Panc1 (cell line): ENCODE measurements at regions of chr11 and their contacts with region 1.

Region 1: GRCh38 chr11:34512840-34513681 is 533 bp downstream of the ELF5 start:
- DNase-seq: peak; percentile 46
- ATAC-seq: peak; percentile 96
- H3K4me3 ChIP-seq: no peak overlapping the region
- H3K27ac ChIP-seq: no peak overlapping the region
- H3K4me1 ChIP-seq: no peaks in the 10 kb centered on the region
- H3K27me3 ChIP-seq: no peaks in the 10 kb centered on the region
- CTCF ChIP-seq: peak; percentile 93

Region 2: DNA sequence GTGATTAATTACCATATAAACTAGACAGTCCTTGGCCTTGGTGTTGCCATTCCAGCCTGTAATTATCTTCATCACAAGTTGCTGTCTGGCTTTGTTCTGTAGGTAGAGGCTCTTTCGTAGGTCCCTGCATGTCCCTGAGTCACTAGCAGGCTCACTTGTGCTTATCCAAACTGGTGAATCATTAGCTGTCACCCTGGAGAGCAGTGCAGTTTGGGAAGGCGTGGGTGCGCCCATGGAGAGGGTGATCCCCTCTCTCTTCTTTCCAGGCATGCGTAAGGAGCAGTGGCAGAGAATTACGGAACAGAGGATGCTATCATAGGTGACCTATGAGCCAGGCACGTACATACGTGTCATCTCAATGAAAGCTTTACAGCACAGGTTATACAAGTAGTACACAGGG is 96.8 kb after region 1 on chr11:
- CTCF ChIA-PET with region 1: no interaction called
- POLR2A ChIA-PET with region 1: no interaction called
- in situ Hi-C with region 1: no loop called
- intact Hi-C with region 1: no loop called
- DNase-seq: no peak
- ATAC-seq: no peak
- H3K4me3 ChIP-seq: no peak overlapping the region
- H3K27ac ChIP-seq: no peak overlapping the region
- H3K4me1 ChIP-seq: no peaks in the 10 kb centered on the region
- H3K27me3 ChIP-seq: no peaks in the 10 kb centered on the region
- CTCF ChIP-seq: no peak

Region 3: DNA sequence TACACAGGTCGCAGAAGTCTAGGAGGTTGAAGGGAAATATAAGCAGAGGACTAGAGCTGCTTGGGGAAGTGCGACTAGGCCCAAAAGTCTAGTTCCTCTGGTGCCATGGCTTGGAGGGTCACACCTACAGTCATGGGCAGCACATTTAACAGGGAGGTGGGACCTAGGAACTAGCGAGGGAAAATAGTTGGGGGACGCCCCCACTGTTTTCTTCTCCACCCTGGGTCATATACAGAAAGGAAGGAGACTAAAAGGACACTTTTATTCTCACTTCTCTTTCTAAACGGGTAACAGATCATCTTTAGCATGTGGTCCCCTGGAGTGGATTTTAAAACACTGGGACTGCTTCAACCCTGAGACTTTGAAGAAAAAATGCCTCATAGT is 386.6 kb after region 1 on chr11:
- CTCF ChIA-PET with region 1: interaction called, 9 read pairs
- POLR2A ChIA-PET with region 1: no interaction called
- in situ Hi-C with region 1: no loop called
- intact Hi-C with region 1: loop called (anchors 5 kb)
- DNase-seq: no peak
- ATAC-seq: peak; percentile 47; the same call in 1 of the 2 replicates
- H3K4me3 ChIP-seq: no peak overlapping the region
- H3K27ac ChIP-seq: peak overlapping the region; percentile 76
- H3K4me1 ChIP-seq: peaks cover 14% of the 10 kb centered on the region
- H3K27me3 ChIP-seq: no peaks in the 10 kb centered on the region
- CTCF ChIP-seq: no peak